ENCODE measurements at regions of chr11 and their contacts with region 1.

Region 1: DNA sequence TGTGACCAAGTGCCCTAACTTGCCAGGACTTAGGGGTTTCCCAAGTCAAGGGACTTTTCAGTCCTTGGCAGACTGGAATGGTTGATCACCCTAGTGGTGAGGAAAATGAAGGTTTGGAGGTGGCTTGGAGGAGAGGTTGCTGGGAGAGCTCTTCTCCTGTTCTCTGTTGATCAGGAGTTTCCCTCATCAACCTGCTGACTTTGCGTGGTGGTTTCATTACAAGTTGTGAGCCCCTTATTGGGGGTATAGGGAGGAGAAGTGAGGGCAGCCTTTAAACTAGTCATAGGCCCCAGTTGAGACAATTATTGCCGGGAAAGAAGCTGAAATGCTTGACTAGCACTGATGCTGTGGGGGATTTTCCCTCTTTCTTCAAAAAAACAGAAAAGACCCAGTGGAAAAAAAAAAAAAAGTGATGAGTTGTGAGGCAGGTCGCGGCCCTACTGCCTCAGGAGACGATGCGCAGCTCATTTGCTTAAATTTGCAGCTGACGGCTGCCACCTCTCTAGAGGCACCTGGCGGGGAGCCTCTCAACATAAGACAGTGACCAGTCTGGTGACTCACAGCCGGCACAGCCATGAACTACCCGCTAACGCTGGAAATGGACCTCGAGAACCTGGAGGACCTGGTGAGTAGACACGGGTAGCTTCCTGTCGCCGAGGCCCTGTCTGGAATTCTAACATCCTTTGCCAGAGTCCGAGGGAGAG is at the start of gene CXCR5:
- DNase-seq: peak; percentile 69
- ATAC-seq: peak; percentile 78
- H3K4me3 Mint-ChIP-seq: peak within 1 kb of the TSS; percentile 98
- H3K27ac Mint-ChIP-seq: peak within 1 kb of the TSS; percentile 98
- H3K4me1 Mint-ChIP-seq: peaks cover 71% of the 10 kb centered on the region
- H3K27me3 Mint-ChIP-seq: no peaks in the 10 kb centered on the region
- CTCF ChIP-seq: no peak
- total RNA-seq, gene CXCR5: 198 and 199 TPM in 2 replicates

Region 2: DNA sequence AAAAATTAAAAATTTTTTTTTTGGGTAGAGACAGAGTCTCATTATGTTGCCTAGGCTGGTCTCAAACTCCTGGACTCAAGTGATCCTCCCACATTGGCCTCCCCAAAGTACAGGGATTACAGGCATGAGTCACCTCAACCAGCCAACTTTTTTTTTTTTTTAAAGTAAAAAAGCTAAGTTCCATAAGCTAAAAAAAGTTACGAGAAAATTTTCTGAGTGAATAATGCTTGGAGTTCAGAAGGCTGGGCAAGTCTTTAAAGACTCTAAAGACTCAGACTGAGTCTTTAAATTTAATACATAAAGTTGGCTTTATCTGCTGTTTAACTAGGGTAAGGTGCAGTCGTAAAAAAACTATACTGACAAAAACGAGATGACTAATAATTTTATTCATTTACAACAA is 98.2 kb before region 1 on chr11:
- CTCF ChIA-PET with region 1: no interaction called
- POLR2A ChIA-PET with region 1: interaction called, 162 read pairs
- intact Hi-C with region 1: no loop called
- DNase-seq: no peak
- ATAC-seq: no peak
- H3K4me3 Mint-ChIP-seq: peak overlapping the region; percentile 60
- H3K27ac Mint-ChIP-seq: peak overlapping the region; percentile 63
- H3K4me1 Mint-ChIP-seq: peaks cover 67% of the 10 kb centered on the region
- H3K27me3 Mint-ChIP-seq: no peaks in the 10 kb centered on the region
- CTCF ChIP-seq: no peak

Region 3: DNA sequence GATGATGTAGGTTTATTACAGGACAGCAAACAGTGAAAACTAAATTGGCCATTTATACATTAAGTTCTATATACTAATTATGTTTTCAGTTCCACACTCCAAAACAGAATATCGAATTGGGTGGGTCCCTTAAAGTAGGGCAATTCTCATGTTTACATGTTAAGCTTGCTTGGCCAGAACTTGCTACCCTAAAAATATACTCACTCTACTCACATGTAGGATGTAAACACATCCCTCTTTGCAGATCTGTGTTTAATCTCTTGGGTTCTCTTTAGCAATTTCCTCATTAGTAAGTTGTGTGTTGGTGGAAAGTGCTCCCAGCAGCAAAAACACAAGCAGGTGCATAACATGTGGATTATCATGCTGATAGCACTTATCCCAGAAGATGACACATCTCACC is 70.0 kb before region 1 on chr11:
- CTCF ChIA-PET with region 1: interaction called, 48 read pairs
- POLR2A ChIA-PET with region 1: interaction called, 91 read pairs
- intact Hi-C with region 1: no loop called
- DNase-seq: no peak
- ATAC-seq: peak; percentile 18
- H3K4me3 Mint-ChIP-seq: peak overlapping the region; percentile 25
- H3K27ac Mint-ChIP-seq: peak overlapping the region; percentile 44
- H3K4me1 Mint-ChIP-seq: peaks cover 66% of the 10 kb centered on the region
- H3K27me3 Mint-ChIP-seq: no peaks in the 10 kb centered on the region
- CTCF ChIP-seq: no peak

Region 4: GRCh38 chr11:118851970-118852369 is 31.6 kb before region 1 on chr11:
- CTCF ChIA-PET with region 1: no interaction called
- POLR2A ChIA-PET with region 1: interaction called, 27 read pairs
- intact Hi-C with region 1: no loop called
- DNase-seq: no peak
- ATAC-seq: peak; percentile 87
- H3K4me3 Mint-ChIP-seq: peak overlapping the region; percentile 55
- H3K27ac Mint-ChIP-seq: peak overlapping the region; percentile 64
- H3K4me1 Mint-ChIP-seq: peaks cover 42% of the 10 kb centered on the region
- H3K27me3 Mint-ChIP-seq: no peaks in the 10 kb centered on the region
- CTCF ChIP-seq: no peak

Region 5: DNA sequence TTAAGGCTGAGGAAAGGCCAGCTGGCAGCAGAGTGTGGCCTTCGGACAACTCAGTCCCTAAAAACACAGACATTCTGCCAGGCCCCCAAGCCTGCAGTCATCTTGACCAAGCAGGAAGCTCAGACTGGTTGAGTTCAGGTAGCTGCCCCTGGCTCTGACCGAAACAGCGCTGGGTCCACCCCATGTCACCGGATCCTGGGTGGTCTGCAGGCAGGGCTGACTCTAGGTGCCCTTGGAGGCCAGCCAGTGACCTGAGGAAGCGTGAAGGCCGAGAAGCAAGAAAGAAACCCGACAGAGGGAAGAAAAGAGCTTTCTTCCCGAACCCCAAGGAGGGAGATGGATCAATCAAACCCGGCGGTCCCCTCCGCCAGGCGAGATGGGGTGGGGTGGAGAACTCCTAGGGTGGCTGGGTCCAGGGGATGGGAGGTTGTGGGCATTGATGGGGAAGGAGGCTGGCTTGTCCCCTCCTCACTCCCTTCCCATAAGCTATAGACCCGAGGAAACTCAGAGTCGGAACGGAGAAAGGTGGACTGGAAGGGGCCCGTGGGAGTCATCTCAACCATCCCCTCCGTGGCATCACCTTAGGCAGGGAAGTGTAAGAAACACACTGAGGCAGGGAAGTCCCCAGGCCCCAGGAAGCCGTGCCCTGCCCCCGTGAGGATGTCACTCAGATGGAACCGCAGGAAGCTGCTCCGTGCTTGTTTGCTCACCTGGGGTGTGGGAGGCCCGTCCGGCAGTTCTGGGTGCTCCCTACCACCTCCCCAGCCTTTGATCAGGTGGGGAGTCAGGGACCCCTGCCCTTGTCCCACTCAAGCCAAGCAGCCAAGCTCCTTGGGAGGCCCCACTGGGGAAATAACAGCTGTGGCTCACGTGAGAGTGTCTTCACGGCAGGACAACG is 11.9 kb after region 1 on chr11:
- CTCF ChIA-PET with region 1: interaction called, 12 read pairs
- POLR2A ChIA-PET with region 1: interaction called, 22 read pairs
- intact Hi-C with region 1: loop called (anchors 1 kb)
- DNase-seq: peak; percentile 62
- ATAC-seq: peak; percentile 70
- H3K4me3 Mint-ChIP-seq: peak overlapping the region; percentile 80
- H3K27ac Mint-ChIP-seq: peak overlapping the region; percentile 98
- H3K4me1 Mint-ChIP-seq: peaks cover 85% of the 10 kb centered on the region
- H3K27me3 Mint-ChIP-seq: no peaks in the 10 kb centered on the region
- CTCF ChIP-seq: no peak

Measured in activated B cell treated with CpG ODN at 0.5 μM for 24 hours (primary cell).